ENCODE measurements at regions of chr5 and their contacts with region 1.

Region 1: DNA sequence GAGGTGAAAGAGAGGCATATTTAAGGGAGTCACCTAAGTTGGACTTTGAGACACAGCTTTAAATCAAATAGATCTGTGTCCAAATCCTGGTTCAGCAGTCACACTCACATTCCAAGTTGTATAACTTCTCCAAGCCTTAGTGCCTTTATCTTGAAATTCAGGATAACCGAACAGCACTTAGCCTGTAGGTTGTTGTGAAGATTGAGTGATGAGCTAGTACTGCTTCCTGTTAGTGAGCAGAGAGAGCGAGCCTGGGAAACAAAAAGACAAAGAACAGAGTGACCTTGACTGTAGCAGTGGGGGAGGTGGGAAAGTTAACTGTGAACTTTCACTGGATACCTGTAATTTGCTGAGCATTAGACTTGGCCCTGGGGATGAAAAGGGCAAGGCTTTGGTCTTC is 22.4 kb downstream of the MAML1 start:
- DNase-seq: no peak
- ATAC-seq: no peak
- H3K4me3 Mint-ChIP-seq: no peak overlapping the region
- H3K27ac Mint-ChIP-seq: no peak overlapping the region
- H3K4me1 Mint-ChIP-seq: peaks cover 36% of the 10 kb centered on the region
- H3K27me3 Mint-ChIP-seq: no peaks in the 10 kb centered on the region
- CTCF ChIP-seq: no peak

Region 2: DNA sequence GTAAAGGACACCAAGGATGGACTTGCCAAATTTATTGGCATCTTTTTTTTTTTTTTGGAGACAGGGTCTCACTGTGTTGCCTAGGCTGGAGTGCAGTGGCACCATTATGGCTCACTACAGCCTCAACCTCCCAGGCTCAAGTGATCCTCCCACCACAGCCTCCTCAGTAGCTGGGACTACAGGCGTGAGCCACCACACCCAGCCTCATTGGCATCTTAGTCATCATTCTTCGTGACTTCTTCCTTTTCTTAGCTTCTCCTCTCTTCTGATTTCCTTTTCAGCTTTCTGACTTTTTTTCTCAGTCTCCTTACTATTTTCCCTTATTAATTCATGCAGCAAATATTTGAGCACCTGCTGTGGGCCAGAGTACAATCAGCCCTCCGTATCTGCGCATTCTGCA is 16.3 kb before region 1 on chr5:
- CTCF ChIA-PET with region 1: no interaction called
- POLR2A ChIA-PET with region 1: no interaction called
- intact Hi-C with region 1: no loop called
- DNase-seq: no peak
- ATAC-seq: no peak
- H3K4me3 Mint-ChIP-seq: no peak overlapping the region
- H3K27ac Mint-ChIP-seq: no peak overlapping the region
- H3K4me1 Mint-ChIP-seq: peaks cover 38% of the 10 kb centered on the region
- H3K27me3 Mint-ChIP-seq: no peaks in the 10 kb centered on the region
- CTCF ChIP-seq: no peak

Region 3: GRCh38 chr5:179900206-179900605 is 145.2 kb after region 1 on chr5:
- CTCF ChIA-PET with region 1: no interaction called
- POLR2A ChIA-PET with region 1: interaction called, 11 read pairs
- intact Hi-C with region 1: no loop called
- DNase-seq: no peak
- ATAC-seq: no peak
- H3K4me3 Mint-ChIP-seq: no peak overlapping the region
- H3K27ac Mint-ChIP-seq: no peak overlapping the region
- H3K4me1 Mint-ChIP-seq: peaks cover 4% of the 10 kb centered on the region
- H3K27me3 Mint-ChIP-seq: no peaks in the 10 kb centered on the region
- CTCF ChIP-seq: no peak